Heart left ventricle (tissue), 16 donors: ENCODE measurements at regions of chr7 and their contacts with region 1.

Region 1: GRCh38 chr7:12827920-12828319 is 140.5 kb downstream of the ARL4A start:
- DNase-seq: no peak
- ATAC-seq: peak; percentile 58 to 92 (median 70)
- H3K4me3 ChIP-seq: no peak overlapping the region
- H3K27ac ChIP-seq: peak overlapping the region in 10 of 12 donors; percentile 30 to 84 (median 58)
- H3K4me1 ChIP-seq: peaks cover 0 to 5% (median 0%) of the 10 kb centered on the region in 12 donors
- H3K27me3 ChIP-seq: no peaks in the 10 kb centered on the region
- CTCF ChIP-seq: no peak
- POLR2A ChIP-seq: no peak

Region 2: GRCh38 chr7:12888717-12889116 is 60.8 kb after region 1 on chr7:
- intact Hi-C with region 1: loop called in 1 of 10 experiments (anchors 10 kb)
- DNase-seq: no peak
- ATAC-seq: no peak
- H3K4me3 ChIP-seq: no peak overlapping the region
- H3K27ac ChIP-seq: no peak overlapping the region
- H3K4me1 ChIP-seq: no peaks in the 10 kb centered on the region
- H3K27me3 ChIP-seq: no peaks in the 10 kb centered on the region
- CTCF ChIP-seq: no peak
- POLR2A ChIP-seq: no peak

Region 3: GRCh38 chr7:13007331-13007730 is 179.4 kb after region 1 on chr7:
- intact Hi-C with region 1: no loop called
- DNase-seq: no peak
- ATAC-seq: no peak
- H3K4me3 ChIP-seq: no peak overlapping the region
- H3K27ac ChIP-seq: no peak overlapping the region
- H3K4me1 ChIP-seq: no peaks in the 10 kb centered on the region
- H3K27me3 ChIP-seq: no peaks in the 10 kb centered on the region
- CTCF ChIP-seq: no peak
- POLR2A ChIP-seq: no peak